Caco-2 (cell line): ENCODE measurements at regions of chr7 and their contacts with region 1.

Region 1: GRCh38 chr7:55280031-55280454 is 85.1 kb upstream of the LANCL2 start:
- DNase-seq: peak; percentile 73 to 82
- H3K4me3 ChIP-seq: no peak overlapping the region
- H3K4me3 Mint-ChIP-seq: no peak overlapping the region
- H3K27ac Mint-ChIP-seq: no peak overlapping the region
- H3K4me1 ChIP-seq: no peaks in the 10 kb centered on the region
- H3K4me1 Mint-ChIP-seq: no peaks in the 10 kb centered on the region
- H3K27me3 ChIP-seq: no peaks in the 10 kb centered on the region
- H3K27me3 Mint-ChIP-seq: peaks cover 6% of the 10 kb centered on the region
- CTCF ChIP-seq: peak; percentile 63 to 74

Region 2: GRCh38 chr7:55415173-55415778 is 135.2 kb after region 1 on chr7:
- CTCF ChIA-PET with region 1: interaction called, 6 read pairs
- POLR2A ChIA-PET with region 1: no interaction called
- intact Hi-C with region 1: loop called (anchors 1 kb)
- DNase-seq: peak; percentile 80 to 89
- H3K4me3 ChIP-seq: no peak overlapping the region
- H3K4me3 Mint-ChIP-seq: no peak overlapping the region
- H3K27ac Mint-ChIP-seq: no peak overlapping the region
- H3K4me1 ChIP-seq: peaks cover 2% of the 10 kb centered on the region; the same call in 1 of the 2 replicates
- H3K4me1 Mint-ChIP-seq: no peaks in the 10 kb centered on the region
- H3K27me3 ChIP-seq: no peaks in the 10 kb centered on the region
- H3K27me3 Mint-ChIP-seq: no peaks in the 10 kb centered on the region
- CTCF ChIP-seq: peak; percentile 85 to 88

Region 3: GRCh38 chr7:55593515-55594318 is 313.7 kb after region 1 on chr7:
- CTCF ChIA-PET with region 1: no interaction called
- POLR2A ChIA-PET with region 1: no interaction called
- intact Hi-C with region 1: loop called (anchors 1 kb)
- DNase-seq: peak; percentile 69 to 80
- H3K4me3 ChIP-seq: no peak overlapping the region
- H3K4me3 Mint-ChIP-seq: no peak overlapping the region
- H3K27ac Mint-ChIP-seq: no peak overlapping the region
- H3K4me1 ChIP-seq: no peaks in the 10 kb centered on the region
- H3K4me1 Mint-ChIP-seq: no peaks in the 10 kb centered on the region
- H3K27me3 ChIP-seq: no peaks in the 10 kb centered on the region
- H3K27me3 Mint-ChIP-seq: peaks cover 10% of the 10 kb centered on the region
- CTCF ChIP-seq: peak; percentile 83 to 84